Heart left ventricle (tissue), 16 donors: ENCODE measurements at regions of chr20 and their contacts with region 1.

Region 1: DNA sequence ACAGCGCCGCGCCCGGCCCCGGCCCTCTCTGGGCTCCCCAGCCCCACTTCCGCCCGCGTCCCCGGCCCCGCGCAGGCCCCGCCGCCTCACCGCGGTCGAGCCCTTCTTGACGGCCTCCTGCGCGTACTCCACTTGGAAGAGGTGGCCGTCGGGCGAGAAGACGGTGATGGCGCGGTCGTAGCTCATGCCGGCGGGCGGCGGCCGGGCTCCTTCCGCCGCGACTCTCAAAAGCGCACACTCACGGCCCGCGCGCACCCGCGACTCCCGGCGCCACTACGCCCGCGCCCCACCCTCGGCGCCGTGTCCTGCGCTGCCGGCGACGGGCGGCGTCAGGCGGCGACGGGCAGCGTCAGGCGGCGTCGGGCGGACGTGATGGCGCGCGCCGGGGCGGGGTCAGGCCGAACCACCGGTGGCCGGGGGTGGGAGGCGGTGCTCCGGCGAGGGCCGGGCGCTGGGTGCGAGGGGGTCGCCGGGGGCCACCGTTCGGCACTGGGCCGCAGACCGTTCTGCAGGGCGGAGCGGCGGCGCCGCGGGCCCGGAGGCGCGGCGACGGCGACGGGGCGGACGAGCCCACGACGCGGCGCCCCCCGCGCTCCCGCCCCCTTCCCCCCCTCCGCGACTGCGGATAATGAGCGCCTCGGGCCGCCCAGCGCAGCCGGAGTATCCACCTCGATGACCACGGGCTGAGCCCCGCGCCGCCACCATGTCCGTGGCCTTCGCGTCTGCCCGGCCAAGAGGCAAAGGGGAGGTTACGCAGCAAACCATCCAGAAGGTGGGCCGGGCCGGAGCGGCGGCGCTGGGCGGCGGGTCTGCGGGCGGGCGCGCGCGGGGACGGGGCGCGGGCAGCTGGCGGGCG is at the starts of genes PSMA7 and SS18L1:
- DNase-seq: peak; percentile 87 to 94 (median 91)
- ATAC-seq: peak; percentile 76 to 94 (median 92)
- H3K4me3 ChIP-seq: peak within 1 kb of the TSS; percentile 75 to 100 (median 88)
- H3K27ac ChIP-seq: peak within 1 kb of the TSS; percentile 89 to 100 (median 98)
- H3K4me1 ChIP-seq: peaks cover 6 to 41% (median 30%) of the 10 kb centered on the region in 12 donors
- H3K27me3 ChIP-seq: no peaks in the 10 kb centered on the region
- CTCF ChIP-seq: no peak
- POLR2A ChIP-seq: peak; percentile 87 to 96
- total RNA-seq, gene PSMA7: 172 to 432 (median 233) TPM
- total RNA-seq, gene SS18L1: 6.5 to 12.4 (median 8.6) TPM

Region 2: DNA sequence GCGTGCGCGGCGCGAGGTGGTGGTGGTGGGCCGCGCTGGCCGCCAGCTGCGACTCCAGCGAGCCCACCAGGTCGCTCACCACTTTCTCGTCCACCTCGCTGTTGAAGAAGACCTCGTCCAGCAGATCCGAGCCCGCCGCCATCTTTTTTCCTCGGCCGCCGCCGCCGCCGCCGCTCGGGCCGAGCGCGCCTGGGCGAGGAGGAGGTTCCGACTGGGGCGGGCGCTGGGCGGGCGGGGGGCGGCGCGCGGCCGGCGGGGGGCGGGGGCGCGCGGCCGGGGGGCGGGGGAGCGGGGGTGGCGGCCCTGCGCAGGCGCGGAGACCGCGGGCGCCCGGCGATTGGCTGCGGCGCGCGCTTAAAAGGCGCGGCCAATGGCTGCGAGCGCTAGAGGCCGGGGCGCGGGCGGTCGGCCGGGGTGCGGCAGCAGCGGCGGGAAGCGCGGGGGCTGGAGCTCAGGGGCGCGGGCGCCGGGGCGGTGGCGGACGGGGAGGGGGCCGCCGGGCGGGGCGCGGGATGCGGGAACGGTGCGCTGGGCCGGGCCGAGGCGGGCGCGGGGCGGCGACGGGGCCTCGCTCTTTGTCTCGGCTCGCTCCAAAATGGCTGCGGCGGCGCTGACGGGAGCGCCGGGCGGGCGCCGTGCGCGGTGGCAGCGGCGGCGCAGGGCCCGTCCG is 77.5 kb before region 1 on chr20 and contains the start of gene TAF4:
- intact Hi-C with region 1: loop called in 6 of 10 experiments (anchors 5 kb)
- DNase-seq: peak; percentile 73 to 89 (median 81)
- ATAC-seq: peak; percentile 54 to 65 (median 58)
- H3K4me3 ChIP-seq: peak within 1 kb of the TSS; percentile 60 to 87 (median 70)
- H3K27ac ChIP-seq: peak within 1 kb of the TSS; percentile 74 to 94 (median 89)
- H3K4me1 ChIP-seq: peaks cover 2 to 41% (median 30%) of the 10 kb centered on the region in 12 donors
- H3K27me3 ChIP-seq: no peaks in the 10 kb centered on the region
- CTCF ChIP-seq: no peak
- POLR2A ChIP-seq: peak in 1 of 2 donors; percentile 85
- total RNA-seq, gene TAF4: 7.8 to 37.7 (median 11.4) TPM

Region 3: GRCh38 chr20:62121776-62122631 is 21.3 kb before region 1 on chr20 and contains the start of gene LSM14B:
- intact Hi-C with region 1: loop called in 2 of 10 experiments (anchors 1 kb)
- DNase-seq: peak; percentile 97 to 98 (median 97)
- ATAC-seq: peak; percentile 83 to 92 (median 88)
- H3K4me3 ChIP-seq: peak within 1 kb of the TSS; percentile 63 to 96 (median 82)
- H3K27ac ChIP-seq: peak within 1 kb of the TSS; percentile 89 to 99 (median 98)
- H3K4me1 ChIP-seq: peaks cover 3 to 59% (median 37%) of the 10 kb centered on the region in 12 donors
- H3K27me3 ChIP-seq: peaks cover 0 to 8% (median 0%) of the 10 kb centered on the region in 9 donors
- CTCF ChIP-seq: no peak
- POLR2A ChIP-seq: peak in 1 of 2 donors; percentile 28
- total RNA-seq, gene LSM14B: 38.6 to 64.7 (median 54.6) TPM

Region 4: DNA sequence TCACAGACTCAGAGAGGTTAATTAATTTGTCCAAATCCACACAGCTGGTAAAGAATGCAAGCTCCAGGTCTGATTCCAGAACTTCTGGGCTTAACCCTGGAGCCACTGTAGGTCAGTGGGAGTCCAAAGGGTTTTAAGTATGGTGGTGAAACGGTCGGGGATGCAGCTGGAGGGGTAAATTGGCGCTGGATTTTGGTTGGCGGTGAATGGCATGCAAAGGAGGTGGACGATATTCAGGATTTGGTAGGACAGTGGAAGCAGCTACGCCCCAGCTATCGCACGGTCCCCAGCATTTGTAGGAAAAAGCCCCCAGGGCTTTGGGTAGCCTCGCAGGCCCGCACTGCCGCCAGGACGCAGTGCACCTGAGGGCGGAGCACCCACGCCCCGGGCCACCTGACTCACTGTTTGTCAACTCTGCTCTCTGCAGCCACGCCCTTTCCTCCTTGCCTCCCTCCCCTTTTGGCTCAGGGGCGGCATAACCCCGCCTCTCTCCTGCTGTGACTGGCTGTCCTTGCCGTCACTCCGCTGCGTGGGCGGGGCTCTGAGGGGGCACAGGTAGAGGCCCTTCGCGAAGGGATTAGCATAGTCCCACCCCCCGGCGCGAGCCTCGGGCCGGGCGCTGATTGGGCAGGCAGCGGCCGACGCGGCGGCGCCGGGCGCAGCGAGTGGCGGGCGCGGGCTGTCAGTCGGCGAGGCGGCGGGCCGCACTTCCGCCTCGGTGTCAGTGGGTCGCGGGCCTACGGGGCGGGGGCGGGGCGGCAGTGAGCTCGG is 94.6 kb after region 1 on chr20 and contains the start of gene OSBPL2:
- intact Hi-C with region 1: loop called in 1 of 10 experiments (anchors 10 kb)
- DNase-seq: peak; percentile 97 to 100 (median 99)
- ATAC-seq: peak; percentile 97 to 98 (median 98)
- H3K4me3 ChIP-seq: peak within 1 kb of the TSS; percentile 63 to 96 (median 79)
- H3K27ac ChIP-seq: peak within 1 kb of the TSS; percentile 47 to 97 (median 86)
- H3K4me1 ChIP-seq: peaks cover 6 to 82% (median 45%) of the 10 kb centered on the region in 12 donors
- H3K27me3 ChIP-seq: no peaks in the 10 kb centered on the region
- CTCF ChIP-seq: no peak
- POLR2A ChIP-seq: peak; percentile 31 to 46
- total RNA-seq, gene OSBPL2: 20.7 to 57.9 (median 40.3) TPM

Region 5: DNA sequence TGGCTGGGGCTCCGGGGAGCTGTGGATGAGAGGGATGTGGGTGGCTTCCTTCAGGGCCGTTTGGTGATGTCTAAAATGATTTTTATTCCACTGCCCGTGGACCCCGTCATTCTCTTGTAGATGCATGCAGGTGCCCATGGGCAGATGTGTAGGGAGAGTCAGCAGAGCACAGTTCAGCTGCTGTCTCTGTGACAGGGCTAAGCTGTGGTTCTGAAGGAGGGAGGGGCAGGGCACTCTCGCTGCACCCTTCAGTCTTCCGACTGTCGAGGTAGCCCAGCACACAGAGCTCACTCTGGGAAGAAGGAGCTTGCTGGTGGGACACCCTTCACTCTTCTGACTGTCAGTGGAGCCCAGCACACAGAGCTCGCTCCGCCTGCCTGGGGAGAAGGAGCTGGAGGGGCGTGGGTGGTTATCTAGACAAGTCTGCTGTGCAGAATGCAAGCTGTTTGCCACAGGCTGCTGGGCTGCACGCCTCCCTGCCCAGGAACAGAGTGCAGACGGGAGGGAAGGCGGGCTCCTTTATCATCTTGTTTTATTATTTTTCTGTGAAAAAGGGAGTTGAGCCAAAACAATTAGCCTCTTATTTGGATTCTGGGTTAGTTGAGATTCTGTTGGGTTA is 131.1 kb after region 1 on chr20:
- intact Hi-C with region 1: no loop called
- DNase-seq: no peak
- ATAC-seq: peak in 3 of 4 donors; percentile 36 to 53 (median 41)
- H3K4me3 ChIP-seq: no peak overlapping the region
- H3K27ac ChIP-seq: no peak overlapping the region
- H3K4me1 ChIP-seq: peaks cover 0 to 25% (median 11%) of the 10 kb centered on the region in 12 donors
- H3K27me3 ChIP-seq: no peaks in the 10 kb centered on the region
- CTCF ChIP-seq: no peak
- POLR2A ChIP-seq: no peak

Region 6: DNA sequence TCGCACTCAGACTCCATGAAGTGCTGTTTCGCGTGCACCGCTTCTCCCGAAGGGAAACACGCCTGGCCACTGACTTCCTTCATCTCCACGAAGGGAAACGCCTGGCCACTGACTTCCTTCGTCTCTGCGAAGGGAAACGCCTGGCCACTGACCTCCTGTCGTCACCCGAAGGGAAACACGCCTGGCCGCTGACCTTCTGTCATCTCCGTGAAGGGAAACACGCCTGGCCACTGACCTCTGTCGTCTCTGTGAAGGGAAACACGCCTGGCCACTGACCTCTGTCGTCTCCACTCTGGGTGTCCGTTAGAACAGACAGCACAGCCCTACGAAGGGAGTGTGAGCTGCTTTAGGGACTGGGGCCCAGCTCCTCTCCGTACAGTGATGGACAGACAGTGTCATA is 142.4 kb after region 1 on chr20:
- intact Hi-C with region 1: loop called in 1 of 10 experiments (anchors 5 kb)
- DNase-seq: peak in 4 of 5 donors; percentile 46 to 76 (median 66)
- ATAC-seq: peak in 3 of 4 donors; percentile 16 to 77 (median 35)
- H3K4me3 ChIP-seq: no peak overlapping the region
- H3K27ac ChIP-seq: peak overlapping the region in 11 of 12 donors; percentile 50 to 85 (median 79)
- H3K4me1 ChIP-seq: peaks cover 0 to 48% (median 33%) of the 10 kb centered on the region in 12 donors
- H3K27me3 ChIP-seq: no peaks in the 10 kb centered on the region
- CTCF ChIP-seq: no peak
- POLR2A ChIP-seq: no peak

Region 7: GRCh38 chr20:62376112-62377063 is 233.0 kb after region 1 on chr20:
- intact Hi-C with region 1: loop called in 2 of 10 experiments (anchors 10 kb)
- DNase-seq: peak; percentile 61 to 77 (median 68)
- ATAC-seq: peak; percentile 52 to 81 (median 73)
- H3K4me3 ChIP-seq: no peak overlapping the region
- H3K27ac ChIP-seq: peak overlapping the region in 11 of 12 donors; percentile 49 to 97 (median 67)
- H3K4me1 ChIP-seq: peaks cover 0 to 59% (median 36%) of the 10 kb centered on the region in 12 donors
- H3K27me3 ChIP-seq: no peaks in the 10 kb centered on the region
- CTCF ChIP-seq: peak; percentile 16 to 66 (median 51)
- POLR2A ChIP-seq: no peak

Region 8: DNA sequence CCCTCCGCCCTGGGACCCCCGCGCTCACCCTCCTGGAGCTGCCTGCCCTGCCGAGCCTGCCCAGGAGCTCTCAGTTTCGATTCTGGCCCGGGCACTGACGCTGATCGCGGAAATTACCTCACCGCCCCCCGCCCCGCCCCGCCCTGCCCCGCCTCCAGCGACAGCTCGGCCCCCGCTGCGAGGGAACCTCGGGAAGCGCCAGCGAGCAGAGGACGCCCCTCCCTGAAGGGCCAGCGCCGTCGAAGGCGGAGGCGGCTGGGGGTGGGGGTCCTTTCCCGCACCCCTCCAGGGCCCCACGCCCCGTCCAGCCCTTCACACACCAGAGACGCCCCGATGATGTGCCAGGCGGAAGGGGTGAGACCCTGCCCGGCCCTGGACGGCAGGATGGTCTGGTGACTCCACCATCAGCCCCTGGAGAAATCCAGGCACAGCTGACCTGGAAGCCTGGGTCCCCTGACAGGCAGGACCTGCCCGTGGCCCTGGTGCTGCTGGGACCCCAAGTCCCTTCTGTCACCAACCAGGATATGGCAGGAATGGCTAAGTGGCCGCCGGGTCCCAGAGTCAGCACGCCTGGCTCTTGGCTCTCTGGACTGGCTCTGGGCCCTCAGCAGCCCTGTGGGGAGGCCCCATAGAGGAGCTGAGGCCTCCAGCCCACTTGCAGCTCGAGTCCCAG is 1430.9 kb after region 1 on chr20 and contains the start of gene HELZ2:
- intact Hi-C with region 1: no loop called
- DNase-seq: peak; percentile 81 to 90 (median 85)
- ATAC-seq: peak; percentile 39 to 82 (median 78)
- H3K4me3 ChIP-seq: peak within 1 kb of the TSS; percentile 65 to 99 (median 86)
- H3K27ac ChIP-seq: peak within 1 kb of the TSS; percentile 54 to 96 (median 86)
- H3K4me1 ChIP-seq: peaks cover 0 to 36% (median 18%) of the 10 kb centered on the region in 12 donors
- H3K27me3 ChIP-seq: peaks cover 0 to 17% (median 0%) of the 10 kb centered on the region in 9 donors
- CTCF ChIP-seq: no peak
- POLR2A ChIP-seq: no peak
- total RNA-seq, gene HELZ2: 10.4 to 34.6 (median 20.9) TPM